ENCODE measurements at regions of chr3 and their contacts with region 1.

Region 1: DNA sequence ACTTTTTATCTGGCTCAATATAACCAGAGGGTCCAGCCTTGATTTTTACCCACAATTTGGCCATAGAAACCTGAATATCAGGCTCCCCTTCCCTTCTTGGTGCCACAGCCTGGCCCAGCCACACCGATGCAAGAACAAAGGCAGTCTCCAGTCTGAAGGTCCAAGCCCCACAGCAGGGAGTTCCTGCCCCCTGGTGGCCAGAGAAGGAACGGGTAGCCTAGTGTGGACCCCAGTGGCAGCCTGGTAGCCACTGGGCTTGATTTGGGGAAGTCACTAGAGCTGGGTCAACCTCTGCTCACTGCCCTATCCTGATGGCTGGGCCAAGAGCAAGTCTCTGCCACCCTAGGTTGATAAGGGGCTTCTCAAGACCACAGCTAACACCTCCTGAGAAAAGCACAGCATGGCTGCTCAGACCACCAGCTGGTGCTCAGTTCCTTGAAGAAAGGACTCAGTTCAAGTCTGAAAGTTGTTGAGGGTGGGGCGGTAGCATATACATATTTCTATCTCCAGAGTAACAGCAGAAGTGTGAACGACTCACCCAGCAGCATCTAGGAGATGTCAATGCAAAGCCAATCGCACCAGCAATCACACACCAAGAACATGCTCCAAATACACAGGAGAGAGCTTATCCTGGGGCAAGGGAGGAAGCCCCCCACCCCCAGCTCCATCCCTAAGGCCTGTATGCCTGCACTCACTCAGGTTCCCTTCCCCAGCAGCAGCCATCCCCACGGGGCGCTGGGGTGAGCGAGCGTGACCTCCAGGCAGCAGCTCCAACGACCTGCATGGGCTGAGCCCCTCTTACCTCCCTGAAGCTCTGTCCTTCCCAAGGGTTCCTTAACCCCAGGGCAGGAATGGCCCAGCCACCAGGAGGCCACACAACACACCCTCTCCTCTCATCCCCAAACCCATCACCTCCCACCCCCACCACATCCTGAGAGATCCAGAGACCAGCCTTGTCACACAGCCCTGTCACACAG is 7.6 kb downstream of the PFKFB4 start:
- DNase-seq: peak; percentile 93

Region 2: DNA sequence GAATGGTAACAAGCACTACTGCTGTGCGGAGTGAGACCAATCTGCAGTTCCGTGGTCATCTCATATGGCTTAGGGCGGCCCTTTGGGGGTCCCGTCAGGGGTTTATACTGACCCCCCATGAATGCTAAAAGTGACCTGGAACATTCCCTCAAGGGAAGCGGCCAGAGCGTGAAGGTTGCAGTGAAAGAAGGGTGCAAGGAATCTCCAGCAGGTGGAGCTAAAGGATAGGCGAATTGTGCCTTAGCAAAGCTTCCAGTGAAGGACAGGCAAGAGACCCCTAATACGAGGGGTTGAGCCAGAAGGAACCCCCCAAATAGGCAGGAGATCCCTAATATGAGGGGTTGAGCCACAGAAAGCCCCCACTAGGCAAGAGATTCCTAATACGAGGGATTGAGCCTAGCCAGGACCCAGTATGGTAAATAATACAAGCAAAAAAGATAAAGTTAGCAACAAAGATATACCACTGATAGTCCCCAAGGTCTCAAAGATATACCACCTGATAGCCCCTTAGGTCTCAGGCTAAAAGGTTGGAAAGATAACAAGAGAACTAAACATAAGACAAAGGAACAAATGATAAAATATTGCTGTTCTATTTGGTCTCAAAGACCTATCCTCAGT is 275.3 kb before region 1 on chr3:
- intact Hi-C with region 1: loop called (anchors 2 kb)
- DNase-seq: no peak

Region 3: GRCh38 chr3:48400824-48401433 is 148.1 kb before region 1 on chr3:
- intact Hi-C with region 1: loop called (anchors 5 kb)
- DNase-seq: peak; percentile 75

Region 4: GRCh38 chr3:48465531-48466378 is 83.3 kb before region 1 on chr3:
- intact Hi-C with region 1: loop called (anchors 1 kb)
- DNase-seq: peak; percentile 97

Region 5: DNA sequence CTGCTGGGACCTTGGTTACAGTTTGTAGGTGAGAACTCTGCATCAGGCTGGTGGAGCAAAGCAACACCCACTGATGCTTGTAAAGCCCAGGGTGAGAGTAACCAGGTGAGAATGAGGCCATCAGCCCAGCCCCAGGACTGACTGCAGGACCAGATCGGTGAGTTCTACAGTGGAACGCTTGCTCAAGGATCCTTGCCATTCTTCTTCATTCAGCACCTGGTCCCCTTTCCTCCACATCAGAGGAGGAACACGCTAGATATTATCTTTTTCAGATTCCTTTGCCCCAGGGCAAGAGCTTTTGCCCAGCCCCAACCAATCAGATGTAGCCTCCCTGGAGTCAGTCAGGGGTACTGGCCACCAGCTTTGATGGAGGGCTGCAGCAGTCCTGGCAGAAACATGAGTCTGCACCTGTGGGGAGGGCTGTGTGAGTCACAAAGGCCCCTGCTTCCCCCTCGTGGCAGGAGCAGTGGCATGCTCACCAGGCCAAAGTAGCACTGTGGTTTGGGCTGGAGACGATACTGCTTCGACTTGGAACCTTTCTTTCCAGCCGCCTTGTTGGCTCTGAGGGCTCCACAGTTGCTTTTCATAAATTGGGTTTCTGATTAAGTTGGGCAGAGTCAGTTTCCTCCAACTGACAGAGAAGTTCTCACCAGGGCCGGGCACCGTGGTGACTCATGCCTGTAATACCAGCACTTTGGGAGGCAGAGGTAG is 41.5 kb before region 1 on chr3:
- intact Hi-C with region 1: loop called (anchors 5 kb)
- DNase-seq: no peak

Region 6: GRCh38 chr3:49582177-49582576 is 1033.2 kb after region 1 on chr3:
- intact Hi-C with region 1: no loop called
- DNase-seq: no peak